ENCODE measurements at regions of chr19 and their contacts with region 1.

Region 1: DNA sequence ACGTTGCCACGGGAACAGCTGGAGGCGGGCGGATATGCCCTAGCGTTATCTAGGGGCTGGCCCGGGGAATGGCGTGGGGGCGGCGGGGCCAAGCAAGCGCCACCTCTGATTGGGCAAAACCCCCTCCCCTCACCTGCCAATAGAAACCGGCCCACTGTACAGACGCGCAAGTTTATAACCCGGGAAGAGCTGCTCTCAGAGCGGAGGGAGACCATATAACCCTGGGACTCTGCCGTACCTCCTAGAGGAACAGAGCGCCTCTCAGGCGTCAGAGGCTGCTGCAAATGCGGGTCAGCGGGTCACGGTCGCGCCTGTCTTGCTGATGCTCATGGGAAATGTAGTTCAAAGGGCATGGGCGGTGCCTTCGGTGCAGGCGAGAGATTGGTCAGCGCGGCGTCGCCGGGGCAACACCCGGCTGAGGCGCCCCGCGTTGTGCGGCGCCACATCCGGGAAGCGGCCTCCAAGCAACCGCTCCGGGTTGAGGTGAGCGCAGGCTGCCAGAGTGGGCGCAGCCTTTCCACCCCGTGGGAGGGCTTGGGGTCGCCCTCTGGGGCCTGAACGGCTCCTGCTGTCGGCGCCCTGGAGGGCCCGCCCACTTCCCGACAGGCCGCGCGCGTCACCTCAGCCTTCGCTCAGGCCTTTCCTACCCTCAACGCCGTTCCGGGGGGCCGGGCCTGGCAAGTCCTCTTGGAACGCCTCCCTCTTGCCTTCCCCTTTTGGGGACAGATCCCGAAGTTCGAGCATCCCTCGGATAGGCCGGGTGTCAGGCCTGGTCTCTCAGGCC is at the start of gene ZNF446:
- DNase-seq: peak; percentile 95 to 97
- H3K4me3 ChIP-seq: peak within 1 kb of the TSS; percentile 71
- H3K4me3 Mint-ChIP-seq: peak within 1 kb of the TSS; percentile 79
- H3K27ac Mint-ChIP-seq: peak within 1 kb of the TSS; percentile 85
- H3K4me1 ChIP-seq: peaks cover 5% of the 10 kb centered on the region; the same call in 1 of the 2 replicates
- H3K4me1 Mint-ChIP-seq: no peaks in the 10 kb centered on the region
- H3K27me3 ChIP-seq: no peaks in the 10 kb centered on the region
- H3K27me3 Mint-ChIP-seq: no peaks in the 10 kb centered on the region
- CTCF ChIP-seq: no peak
- total RNA-seq, gene ZNF446: 8.6 and 9.7 TPM in 2 replicates

Region 2: GRCh38 chr19:58400916-58401839 is 74.7 kb before region 1 on chr19:
- CTCF ChIA-PET with region 1: no interaction called
- POLR2A ChIA-PET with region 1: no interaction called
- intact Hi-C with region 1: loop called (anchors 2 kb)
- DNase-seq: peak; percentile 99
- H3K4me3 ChIP-seq: peak overlapping the region; percentile 93
- H3K4me3 Mint-ChIP-seq: peak overlapping the region; percentile 99
- H3K27ac Mint-ChIP-seq: peak overlapping the region; percentile 99
- H3K4me1 ChIP-seq: peaks cover 8% of the 10 kb centered on the region
- H3K4me1 Mint-ChIP-seq: peaks cover 11% of the 10 kb centered on the region
- H3K27me3 ChIP-seq: no peaks in the 10 kb centered on the region
- H3K27me3 Mint-ChIP-seq: no peaks in the 10 kb centered on the region
- CTCF ChIP-seq: no peak

Region 3: GRCh38 chr19:58519355-58520256 is 43.7 kb after region 1 on chr19 and contains the start of gene ZBTB45:
- CTCF ChIA-PET with region 1: no interaction called
- POLR2A ChIA-PET with region 1: no interaction called
- intact Hi-C with region 1: no loop called
- DNase-seq: peak; percentile 94 to 95
- H3K4me3 ChIP-seq: peak within 1 kb of the TSS; percentile 55
- H3K4me3 Mint-ChIP-seq: peak within 1 kb of the TSS; percentile 85
- H3K27ac Mint-ChIP-seq: peak within 1 kb of the TSS; percentile 85
- H3K4me1 ChIP-seq: peaks cover 13% of the 10 kb centered on the region
- H3K4me1 Mint-ChIP-seq: peaks cover 20% of the 10 kb centered on the region
- H3K27me3 ChIP-seq: no peaks in the 10 kb centered on the region
- H3K27me3 Mint-ChIP-seq: no peaks in the 10 kb centered on the region
- CTCF ChIP-seq: peak; percentile 64 to 93
- total RNA-seq, gene ZBTB45: 14.6 and 14.8 TPM in 2 replicates

Region 4: GRCh38 chr19:58581227-58582151 is 105.6 kb after region 1 on chr19:
- CTCF ChIA-PET with region 1: no interaction called
- POLR2A ChIA-PET with region 1: no interaction called
- intact Hi-C with region 1: no loop called
- DNase-seq: peak; percentile 43 to 58
- H3K4me3 ChIP-seq: no peak overlapping the region
- H3K4me3 Mint-ChIP-seq: no peak overlapping the region
- H3K27ac Mint-ChIP-seq: no peak overlapping the region
- H3K4me1 ChIP-seq: no peaks in the 10 kb centered on the region
- H3K4me1 Mint-ChIP-seq: no peaks in the 10 kb centered on the region
- H3K27me3 ChIP-seq: no peaks in the 10 kb centered on the region
- H3K27me3 Mint-ChIP-seq: no peaks in the 10 kb centered on the region
- CTCF ChIP-seq: peak in 1 of 2 experiments; percentile 23